Right lobe of liver (tissue), 6 donors: ENCODE measurements at regions of chr5 and their contacts with region 1.

Region 1: DNA sequence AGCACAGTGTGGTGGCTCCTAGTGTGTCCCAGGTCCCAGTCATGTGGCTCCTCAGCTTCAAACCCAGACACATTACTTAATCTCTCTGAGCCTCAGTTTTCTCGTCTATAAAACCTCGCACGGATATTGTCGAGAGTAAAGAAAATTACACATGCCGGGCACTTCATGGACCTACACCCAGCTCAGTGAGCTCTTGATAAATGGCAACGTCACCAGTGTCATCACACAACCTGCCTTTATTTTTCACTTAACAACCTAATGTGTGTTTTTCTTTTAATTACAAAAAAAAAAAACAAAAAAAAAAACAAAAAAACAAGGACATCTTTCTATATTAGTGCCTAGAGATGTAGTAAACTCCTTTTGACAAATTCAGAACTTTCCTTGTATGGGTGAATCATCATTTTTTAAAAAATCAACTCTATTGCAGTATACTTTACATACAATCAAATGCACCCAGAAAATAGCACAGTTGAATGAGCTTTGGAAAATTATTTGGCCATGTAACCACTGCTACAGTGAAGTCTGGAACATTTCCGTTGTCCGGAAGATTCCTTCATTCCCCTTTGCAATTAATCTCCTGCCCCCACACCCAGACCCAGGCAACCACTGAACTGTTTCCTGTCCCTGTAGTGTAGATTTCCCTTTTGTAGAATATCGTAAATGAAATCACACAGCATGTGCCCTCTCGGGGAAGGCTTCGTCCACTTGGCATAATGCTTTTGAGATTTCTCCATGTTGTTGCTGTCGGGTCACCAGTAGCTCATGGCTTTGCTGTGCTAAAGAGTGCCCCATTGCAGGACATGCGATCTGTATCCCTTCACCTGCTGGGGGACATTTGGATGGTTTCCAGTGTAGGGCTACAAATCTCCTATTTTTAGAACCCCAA is 100.4 kb upstream of the LARP1 start:
- DNase-seq: no peak
- ATAC-seq: peak in 1 of 4 donors; percentile 6
- H3K4me3 ChIP-seq: no peak overlapping the region
- H3K27ac ChIP-seq: peak overlapping the region; percentile 64 to 71 (median 71)
- H3K4me1 ChIP-seq: peaks cover 0 to 18% (median 12%) of the 10 kb centered on the region in 4 donors
- H3K27me3 ChIP-seq: no peaks in the 10 kb centered on the region
- CTCF ChIP-seq: no peak
- POLR2A ChIP-seq: no peak

Region 2: DNA sequence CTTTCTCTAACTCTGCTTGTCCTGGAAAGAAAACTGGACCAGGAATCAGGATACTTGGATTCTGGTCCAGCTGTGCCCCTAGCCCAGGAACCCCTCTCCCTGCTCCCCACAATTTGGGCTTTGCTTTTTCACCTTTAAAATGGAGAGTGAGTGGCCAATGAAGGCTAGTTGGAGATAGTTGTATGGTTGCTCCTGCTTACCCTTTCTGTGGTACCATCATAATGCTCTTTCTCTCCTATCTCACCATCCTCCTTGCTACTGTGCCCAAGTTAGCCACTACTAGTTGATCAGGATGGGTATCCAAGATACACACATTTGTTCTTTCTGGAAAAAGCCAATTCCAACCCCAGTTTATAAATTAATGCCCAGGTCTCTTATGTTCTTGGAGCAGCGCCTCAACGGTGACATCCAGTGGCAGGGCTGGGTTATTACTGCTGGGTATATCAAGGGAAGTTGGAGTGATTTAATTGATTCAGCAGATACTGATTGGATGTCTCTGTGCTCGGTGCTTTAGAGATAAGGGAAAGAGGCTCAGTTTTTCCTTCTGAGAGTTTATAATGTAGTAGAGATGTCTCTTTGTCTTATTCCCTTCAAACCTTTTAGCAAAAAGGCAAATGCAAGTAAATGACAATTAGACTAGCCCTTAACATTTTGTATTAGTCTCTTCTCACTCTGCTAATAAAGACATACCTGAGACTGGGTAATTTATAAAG is 157.1 kb after region 1 on chr5:
- intact Hi-C with region 1: loop called in 1 of 2 experiments (anchors 5 kb)
- DNase-seq: peak; percentile 61 to 66 (median 65)
- ATAC-seq: peak; percentile 75 to 83 (median 78)
- H3K4me3 ChIP-seq: no peak overlapping the region
- H3K27ac ChIP-seq: no peak overlapping the region
- H3K4me1 ChIP-seq: peaks cover 0 to 19% (median 9%) of the 10 kb centered on the region in 4 donors
- H3K27me3 ChIP-seq: no peaks in the 10 kb centered on the region
- CTCF ChIP-seq: peak; percentile 86 to 88 (median 86)
- POLR2A ChIP-seq: no peak

Region 3: GRCh38 chr5:154937718-154938466 is 283.2 kb after region 1 on chr5 and contains the start of gene GEMIN5:
- intact Hi-C with region 1: loop called in 1 of 2 experiments (anchors 5 kb)
- DNase-seq: peak; percentile 91 to 93 (median 92)
- ATAC-seq: peak; percentile 93 to 97 (median 95)
- H3K4me3 ChIP-seq: peak within 1 kb of the TSS; percentile 88 to 97 (median 96)
- H3K27ac ChIP-seq: peak within 1 kb of the TSS; percentile 35 to 72 (median 59)
- H3K4me1 ChIP-seq: peaks cover 0 to 40% (median 8%) of the 10 kb centered on the region in 4 donors
- H3K27me3 ChIP-seq: no peaks in the 10 kb centered on the region
- CTCF ChIP-seq: no peak
- POLR2A ChIP-seq: peak; percentile 36
- total RNA-seq, gene GEMIN5: 5.7 to 11.3 (median 7.5) TPM